CD14-positive monocyte (primary cell): ENCODE measurements at regions of chr9 and their contacts with region 1.

Region 1: GRCh38 chr9:6450641-6451375 is 37.8 kb downstream of the UHRF2 start:
- DNase-seq: no peak
- H3K4me3 ChIP-seq: no peak overlapping the region
- H3K4me3 Mint-ChIP-seq: no peak overlapping the region
- H3K27ac ChIP-seq: no peak overlapping the region
- H3K27ac Mint-ChIP-seq: peak overlapping the region in 1 of 7 donors; percentile 55
- H3K4me1 ChIP-seq: no peaks in the 10 kb centered on the region
- H3K4me1 Mint-ChIP-seq: peaks cover 8% of the 10 kb centered on the region
- H3K27me3 ChIP-seq: no peaks in the 10 kb centered on the region
- H3K27me3 Mint-ChIP-seq: no peaks in the 10 kb centered on the region
- CTCF ChIP-seq: no peak

Region 2: DNA sequence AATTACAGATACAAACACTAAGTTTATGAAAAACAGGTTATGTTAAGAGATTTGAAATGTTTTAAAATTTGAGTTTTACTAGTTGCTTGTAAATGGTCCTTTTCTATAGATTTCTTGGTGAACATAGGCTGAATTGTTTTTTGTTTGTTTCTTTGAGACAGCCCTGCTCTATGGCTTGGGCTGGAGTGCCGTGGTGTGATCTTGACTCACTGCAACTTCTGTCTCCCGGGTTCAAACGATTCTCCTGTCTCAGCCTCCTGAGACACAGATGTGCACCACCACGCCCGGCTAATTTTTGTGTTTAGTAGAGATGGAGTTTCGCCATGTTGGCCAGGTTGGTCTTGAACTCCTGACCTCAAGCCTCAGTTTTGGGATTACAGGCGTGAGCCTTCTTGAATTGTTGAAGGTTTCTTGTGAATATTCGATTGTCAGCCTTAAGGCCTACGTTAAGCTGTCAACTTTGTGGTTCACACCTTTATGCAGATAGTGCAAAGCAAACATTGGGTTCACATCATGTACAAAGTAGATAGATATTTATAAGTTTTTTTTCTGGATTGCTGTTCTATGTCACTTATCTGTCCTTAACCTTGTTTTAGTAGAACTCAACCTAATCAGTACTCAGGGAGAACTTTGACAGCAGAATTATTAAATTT is 11.6 kb before region 1 on chr9:
- intact Hi-C with region 1: loop called in 1 of 2 experiments (anchors 2 kb)
- DNase-seq: no peak
- H3K4me3 ChIP-seq: no peak overlapping the region
- H3K4me3 Mint-ChIP-seq: no peak overlapping the region
- H3K27ac ChIP-seq: peak overlapping the region in 1 of 2 donors; percentile 3
- H3K27ac Mint-ChIP-seq: peak overlapping the region in 4 of 7 donors; percentile 7 to 60 (median 36)
- H3K4me1 ChIP-seq: peaks cover 0 to 4% of the 10 kb centered on the region in 2 donors
- H3K4me1 Mint-ChIP-seq: peaks cover 19% of the 10 kb centered on the region
- H3K27me3 ChIP-seq: no peaks in the 10 kb centered on the region
- H3K27me3 Mint-ChIP-seq: no peaks in the 10 kb centered on the region
- CTCF ChIP-seq: no peak

Region 3: GRCh38 chr9:6598249-6598725 is 147.5 kb after region 1 on chr9:
- intact Hi-C with region 1: no loop called
- DNase-seq: no peak
- H3K4me3 ChIP-seq: no peak overlapping the region
- H3K4me3 Mint-ChIP-seq: no peak overlapping the region
- H3K27ac ChIP-seq: no peak overlapping the region
- H3K27ac Mint-ChIP-seq: no peak overlapping the region
- H3K4me1 ChIP-seq: no peaks in the 10 kb centered on the region
- H3K4me1 Mint-ChIP-seq: no peaks in the 10 kb centered on the region
- H3K27me3 ChIP-seq: no peaks in the 10 kb centered on the region
- H3K27me3 Mint-ChIP-seq: peaks cover 0 to 2% (median 2%) of the 10 kb centered on the region in 3 donors
- CTCF ChIP-seq: no peak